ENCODE measurements at regions of chr11 and their contacts with region 1.

Region 1: DNA sequence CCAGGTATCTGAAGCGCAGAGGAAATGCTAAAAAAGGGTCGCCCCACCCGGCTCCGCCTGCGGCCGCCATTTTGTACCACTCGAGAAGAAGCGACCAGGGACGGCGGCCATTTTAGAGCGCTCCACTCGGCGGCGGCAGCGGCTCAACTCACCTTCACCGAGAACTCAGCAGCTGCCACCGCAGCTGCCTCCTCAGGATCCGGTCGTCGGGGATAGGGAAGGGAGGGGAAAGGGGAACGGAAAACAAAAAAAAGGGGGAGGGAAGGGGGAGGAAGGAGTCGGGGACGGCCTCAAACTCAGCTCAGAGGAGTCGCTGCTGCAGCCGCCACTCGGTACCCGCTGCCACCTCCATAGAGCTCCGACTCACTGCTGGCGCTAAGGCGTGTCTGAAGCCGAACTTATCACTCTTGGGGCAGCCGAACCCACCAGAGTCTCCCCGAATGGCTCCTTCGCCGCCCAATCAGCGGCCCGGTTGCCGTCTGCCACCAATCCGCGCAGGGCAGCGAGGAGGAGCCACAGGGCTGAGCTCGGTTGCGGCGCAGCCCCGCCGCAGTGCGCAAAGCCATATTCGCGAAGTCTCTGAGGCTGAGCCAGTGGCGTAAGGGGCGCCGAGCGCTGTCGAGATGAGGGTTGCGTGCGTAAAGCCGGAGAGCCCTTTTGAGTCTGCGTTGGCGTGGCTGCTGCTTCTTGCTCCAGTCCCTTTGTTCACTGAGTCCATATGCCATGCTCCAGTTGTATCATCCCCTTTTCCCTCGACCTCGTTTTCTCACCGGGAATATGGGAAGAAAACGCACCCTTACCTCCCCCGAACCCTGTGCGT is at the start of gene EIF4G2:
- DNase-seq: peak; percentile 96
- ATAC-seq: peak; percentile 91
- H3K4me3 Mint-ChIP-seq: peak within 1 kb of the TSS; percentile 97
- H3K27ac Mint-ChIP-seq: peak within 1 kb of the TSS; percentile 99
- H3K4me1 Mint-ChIP-seq: peaks cover 42% of the 10 kb centered on the region
- H3K27me3 Mint-ChIP-seq: no peaks in the 10 kb centered on the region
- CTCF ChIP-seq: no peak
- total RNA-seq, gene EIF4G2: 675 and 769 TPM in 2 replicates

Region 2: DNA sequence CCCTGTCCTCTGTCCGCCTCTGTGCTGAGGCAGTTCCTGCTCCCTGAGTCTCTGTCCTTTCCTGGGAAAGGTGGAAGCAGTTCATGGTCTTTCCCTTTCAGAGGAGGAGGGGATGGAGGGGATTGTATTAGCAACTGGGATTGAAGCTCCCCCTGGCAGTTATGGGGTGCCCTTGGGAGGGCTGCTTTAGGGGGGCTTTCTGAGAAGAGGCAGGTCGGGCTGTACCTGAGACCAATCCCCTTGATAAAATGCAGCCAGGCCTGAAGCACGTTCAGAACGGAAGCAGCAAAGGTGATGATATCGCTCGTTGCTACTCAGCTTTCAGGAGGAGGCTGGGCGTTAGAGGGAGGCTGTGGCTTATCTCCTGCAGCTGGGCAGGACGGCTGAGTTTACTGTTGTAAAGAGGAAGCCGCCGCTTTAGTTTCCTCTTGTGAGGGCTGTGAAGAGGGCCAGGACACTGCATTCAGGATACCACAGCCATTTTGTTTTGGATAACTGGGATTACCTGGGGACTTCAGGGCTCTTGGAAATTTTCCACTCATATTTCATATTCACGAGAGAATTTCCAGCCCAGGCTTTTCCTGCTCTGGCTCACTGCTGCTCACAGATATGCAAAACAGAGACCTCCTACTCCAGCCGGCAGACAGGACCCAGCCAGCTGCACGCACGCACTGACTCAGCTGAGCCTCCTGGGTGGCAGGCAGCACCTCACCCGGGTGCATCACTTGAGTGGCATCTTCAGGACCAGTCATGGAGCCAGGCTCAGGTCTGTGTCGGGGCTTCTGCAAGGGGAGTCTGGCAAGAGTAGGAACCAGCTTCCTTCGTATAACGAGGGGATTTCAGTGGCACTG is 352.9 kb before region 1 on chr11:
- CTCF ChIA-PET with region 1: no interaction called
- POLR2A ChIA-PET with region 1: interaction called, 16 read pairs
- intact Hi-C with region 1: no loop called
- DNase-seq: peak; percentile 69
- ATAC-seq: peak; percentile 70
- H3K4me3 Mint-ChIP-seq: peak overlapping the region; percentile 87
- H3K27ac Mint-ChIP-seq: peak overlapping the region; percentile 96
- H3K4me1 Mint-ChIP-seq: peaks cover 95% of the 10 kb centered on the region
- H3K27me3 Mint-ChIP-seq: no peaks in the 10 kb centered on the region
- CTCF ChIP-seq: no peak

Region 3: DNA sequence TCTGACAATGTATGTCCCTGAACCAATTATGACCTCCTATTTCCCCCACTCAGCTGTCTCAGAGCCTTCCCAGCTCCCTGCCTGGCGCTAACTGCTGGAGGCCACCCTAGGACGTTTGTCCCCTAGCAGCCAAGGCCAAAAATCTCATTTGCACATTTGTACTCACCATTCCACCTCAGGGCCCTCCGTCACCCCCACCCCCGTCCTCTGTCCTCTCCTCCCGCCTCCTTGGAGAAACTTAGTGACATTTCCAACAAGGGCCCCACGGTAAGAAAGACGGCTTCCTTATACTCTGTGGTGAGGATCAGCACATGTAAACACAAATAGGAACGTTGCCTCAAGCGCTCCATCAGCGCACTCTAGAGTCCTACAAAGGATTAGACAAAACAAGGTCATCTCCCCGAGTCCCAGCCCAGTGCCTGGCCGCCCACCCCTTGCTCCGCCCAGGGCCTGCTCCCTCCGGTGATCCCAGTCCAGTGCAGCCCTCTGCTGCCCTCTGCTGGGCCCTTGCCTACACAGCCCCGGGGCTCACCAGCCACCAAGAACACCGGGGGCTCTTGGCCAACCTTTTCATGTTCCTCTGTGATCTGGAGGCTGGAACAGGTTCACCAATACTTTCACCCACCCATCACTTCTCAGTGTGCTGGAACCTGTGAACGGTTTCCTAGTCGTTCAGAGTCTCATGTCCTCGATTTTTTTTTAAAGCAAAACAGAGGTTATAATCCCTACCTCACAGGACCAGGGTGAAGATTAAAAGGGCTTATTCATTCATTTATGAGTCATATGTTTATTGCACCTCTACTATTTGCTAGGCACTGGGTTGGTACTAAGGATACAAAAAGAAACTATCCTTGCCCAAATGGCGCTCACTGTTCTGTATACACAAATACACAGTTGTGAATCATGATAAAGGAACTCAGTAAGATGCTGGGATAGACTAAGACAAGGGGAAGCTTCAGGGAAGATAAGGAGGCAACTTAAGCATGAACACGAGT is 73.0 kb before region 1 on chr11:
- CTCF ChIA-PET with region 1: no interaction called
- POLR2A ChIA-PET with region 1: no interaction called
- intact Hi-C with region 1: no loop called
- DNase-seq: peak; percentile 93
- ATAC-seq: peak; percentile 100
- H3K4me3 Mint-ChIP-seq: peak overlapping the region; percentile 77
- H3K27ac Mint-ChIP-seq: peak overlapping the region; percentile 83
- H3K4me1 Mint-ChIP-seq: peaks cover 13% of the 10 kb centered on the region
- H3K27me3 Mint-ChIP-seq: no peaks in the 10 kb centered on the region
- CTCF ChIP-seq: peak; percentile 65

Region 4: DNA sequence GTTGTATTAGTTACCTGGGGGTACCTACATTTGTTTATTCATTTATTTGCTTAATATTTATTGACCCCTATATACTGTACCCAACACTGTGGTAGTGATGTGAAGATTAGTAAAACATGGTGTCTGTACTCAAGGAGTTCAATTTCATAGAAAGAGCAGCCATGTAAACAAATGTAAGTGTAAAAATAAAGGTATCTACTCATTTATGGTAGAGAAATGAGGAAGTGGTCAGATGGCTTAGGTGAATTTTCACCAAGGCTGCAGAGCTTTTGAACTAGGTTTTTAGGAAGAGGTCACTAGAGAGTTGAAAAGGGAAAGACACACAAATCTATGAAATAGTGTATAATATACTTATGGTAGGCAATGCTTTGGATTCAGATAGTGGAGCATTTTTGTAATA is 46.6 kb before region 1 on chr11:
- CTCF ChIA-PET with region 1: no interaction called
- POLR2A ChIA-PET with region 1: interaction called, 23 read pairs
- intact Hi-C with region 1: no loop called
- DNase-seq: no peak
- ATAC-seq: peak; percentile 73
- H3K4me3 Mint-ChIP-seq: peak overlapping the region; percentile 30
- H3K27ac Mint-ChIP-seq: peak overlapping the region; percentile 65
- H3K4me1 Mint-ChIP-seq: peaks cover 29% of the 10 kb centered on the region
- H3K27me3 Mint-ChIP-seq: no peaks in the 10 kb centered on the region
- CTCF ChIP-seq: no peak

Region 5: GRCh38 chr11:10797531-10797930 is 11.2 kb before region 1 on chr11:
- CTCF ChIA-PET with region 1: interaction called, 27 read pairs
- POLR2A ChIA-PET with region 1: interaction called, 77 read pairs
- intact Hi-C with region 1: loop called (anchors 1 kb)
- DNase-seq: no peak
- ATAC-seq: no peak
- H3K4me3 Mint-ChIP-seq: no peak overlapping the region
- H3K27ac Mint-ChIP-seq: no peak overlapping the region
- H3K4me1 Mint-ChIP-seq: peaks cover 20% of the 10 kb centered on the region
- H3K27me3 Mint-ChIP-seq: no peaks in the 10 kb centered on the region
- CTCF ChIP-seq: no peak

Region 6: GRCh38 chr11:10844356-10844755 is 35.6 kb after region 1 on chr11:
- CTCF ChIA-PET with region 1: no interaction called
- POLR2A ChIA-PET with region 1: interaction called, 470 read pairs
- intact Hi-C with region 1: no loop called
- DNase-seq: no peak
- ATAC-seq: no peak
- H3K4me3 Mint-ChIP-seq: no peak overlapping the region
- H3K27ac Mint-ChIP-seq: no peak overlapping the region
- H3K4me1 Mint-ChIP-seq: peaks cover 13% of the 10 kb centered on the region
- H3K27me3 Mint-ChIP-seq: no peaks in the 10 kb centered on the region
- CTCF ChIP-seq: no peak

Region 7: DNA sequence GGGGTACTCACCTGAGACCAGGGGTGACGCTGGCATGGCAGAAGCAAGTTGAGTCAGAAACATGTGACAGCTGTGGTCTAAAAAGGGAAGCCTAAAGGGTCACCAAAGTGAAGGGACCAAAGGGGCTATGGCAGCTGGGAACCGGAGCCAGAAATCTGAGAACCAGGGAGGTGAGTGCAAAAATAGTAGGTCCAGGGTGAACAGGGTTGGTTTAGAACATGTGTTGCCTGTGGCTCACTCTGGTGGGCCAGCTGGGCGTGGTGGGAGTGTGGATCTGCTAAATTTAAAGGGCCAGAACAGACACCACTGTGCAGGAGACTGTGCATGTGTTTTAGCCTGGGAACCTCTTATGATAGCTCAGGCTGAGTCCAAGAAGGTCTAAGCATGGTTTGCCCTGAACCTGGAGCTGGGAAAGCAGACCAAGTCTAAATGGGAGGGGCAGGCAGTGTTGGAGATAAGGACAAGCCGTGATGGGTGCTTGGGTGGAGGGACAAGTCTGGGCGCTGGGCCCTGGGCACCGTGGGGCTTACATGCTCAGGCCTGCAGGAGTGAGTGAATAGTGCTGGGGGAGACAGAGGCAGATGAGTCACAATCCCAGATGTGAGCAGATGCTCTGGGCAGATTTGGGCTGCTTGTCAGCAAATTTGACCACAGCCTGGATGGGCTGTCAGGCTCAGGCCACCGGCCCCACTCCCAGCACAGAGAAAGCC is 90.5 kb after region 1 on chr11:
- CTCF ChIA-PET with region 1: no interaction called
- POLR2A ChIA-PET with region 1: interaction called, 21 read pairs
- intact Hi-C with region 1: no loop called
- DNase-seq: no peak
- ATAC-seq: peak; percentile 38
- H3K4me3 Mint-ChIP-seq: no peak overlapping the region
- H3K27ac Mint-ChIP-seq: peak overlapping the region; percentile 15
- H3K4me1 Mint-ChIP-seq: peaks cover 20% of the 10 kb centered on the region
- H3K27me3 Mint-ChIP-seq: peaks cover 2% of the 10 kb centered on the region
- CTCF ChIP-seq: no peak

Region 8: DNA sequence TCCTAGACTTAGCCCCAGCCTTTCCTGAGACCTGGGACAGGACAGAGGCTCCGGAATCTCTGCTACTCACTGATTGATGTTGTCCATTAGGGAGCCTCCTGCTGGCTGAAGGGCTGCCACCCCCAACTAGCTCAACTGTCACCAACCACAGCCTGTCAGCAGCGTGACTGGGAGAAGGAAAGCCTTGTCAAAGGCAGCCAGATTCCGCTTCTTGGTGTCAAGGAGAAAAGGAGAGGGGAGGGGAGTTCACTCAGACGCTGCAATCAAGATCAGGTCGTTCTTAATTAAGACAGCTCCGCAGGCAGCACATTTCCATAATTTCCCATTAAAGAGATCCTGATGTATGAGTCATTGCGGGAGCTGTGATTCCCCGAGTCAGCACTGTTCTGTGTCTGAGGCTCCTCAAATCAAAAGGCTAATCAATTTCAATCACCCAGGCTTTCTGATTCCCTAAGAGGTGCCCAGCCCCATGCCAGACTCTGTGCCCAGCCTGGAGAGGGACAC is 201.9 kb after region 1 on chr11:
- CTCF ChIA-PET with region 1: no interaction called
- POLR2A ChIA-PET with region 1: interaction called, 11 read pairs
- intact Hi-C with region 1: no loop called
- DNase-seq: no peak
- ATAC-seq: no peak
- H3K4me3 Mint-ChIP-seq: no peak overlapping the region
- H3K27ac Mint-ChIP-seq: no peak overlapping the region
- H3K4me1 Mint-ChIP-seq: peaks cover 24% of the 10 kb centered on the region
- H3K27me3 Mint-ChIP-seq: peaks cover 8% of the 10 kb centered on the region
- CTCF ChIP-seq: no peak

Measured in activated B cell treated with CpG ODN at 0.5 μM for 24 hours (primary cell).